ENCODE measurements at regions of chr2 and their contacts with region 1.

Region 1: DNA sequence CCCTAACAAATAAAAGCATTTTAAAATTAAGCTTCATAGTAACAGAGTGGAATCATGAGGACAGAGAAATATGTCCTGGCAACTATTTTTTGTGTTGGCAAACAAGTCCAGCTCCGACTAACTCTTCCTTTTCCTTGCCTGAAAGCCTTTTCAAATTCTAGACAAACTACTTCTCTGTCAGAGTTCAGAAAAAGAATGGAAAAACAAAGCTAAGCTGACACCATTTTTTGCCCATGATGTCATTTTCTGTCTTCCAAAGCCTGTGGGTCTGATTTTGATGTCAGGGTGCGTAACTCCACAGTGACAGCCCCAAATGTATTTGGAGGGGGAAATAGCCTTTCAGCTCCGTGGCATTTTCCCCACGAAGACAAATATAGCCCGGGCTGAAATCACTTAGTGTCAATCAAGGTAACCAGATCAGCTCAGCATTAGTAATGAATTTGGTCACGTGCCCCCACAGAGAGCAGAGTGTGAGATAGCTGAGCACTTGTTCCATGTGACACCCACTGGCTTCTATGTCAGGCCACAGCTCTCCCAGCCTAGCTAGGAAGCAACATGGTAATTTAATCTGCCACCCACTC is 233.0 kb upstream of the SIX2 start:
- DNase-seq: no peak
- ATAC-seq: no peak
- H3K4me3 ChIP-seq: no peak overlapping the region
- H3K27ac ChIP-seq: no peak overlapping the region; the same call in 1 of the 2 replicates
- H3K4me1 ChIP-seq: peaks cover 31% of the 10 kb centered on the region
- H3K27me3 ChIP-seq: no peaks in the 10 kb centered on the region
- CTCF ChIP-seq: no peak

Region 2: DNA sequence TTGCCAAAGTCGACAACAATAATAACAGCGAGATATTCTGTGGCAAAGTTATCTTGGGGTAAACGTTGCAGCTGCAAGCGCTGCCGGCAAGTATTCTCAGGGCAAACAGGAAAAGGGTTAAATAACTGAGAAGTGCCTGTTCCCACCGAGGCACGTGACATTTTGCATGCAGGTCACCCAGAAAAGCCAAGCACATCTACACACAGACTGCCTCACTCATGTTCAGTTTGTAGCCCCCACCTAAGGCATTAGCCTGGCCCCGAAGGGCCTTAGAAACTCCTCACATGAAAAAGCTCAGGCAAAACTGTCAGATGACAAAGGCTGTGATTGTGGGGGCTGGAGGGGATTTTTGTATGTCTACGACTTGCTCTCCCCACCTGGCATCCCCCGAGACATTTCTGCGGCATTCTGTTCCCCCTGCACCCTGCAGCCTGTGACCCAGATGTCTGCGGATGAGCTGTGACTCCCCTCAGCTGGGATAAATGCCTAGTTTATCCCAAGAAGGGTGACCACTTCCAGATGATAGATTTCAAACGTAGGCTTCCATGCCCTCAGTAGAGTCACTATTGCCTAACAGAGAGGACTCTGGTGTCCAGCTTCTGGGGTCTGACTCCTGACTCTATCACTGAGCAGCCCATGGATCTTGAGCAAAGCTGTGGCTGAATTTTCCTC is 17.8 kb before region 1 on chr2:
- CTCF ChIA-PET with region 1: no interaction called
- POLR2A ChIA-PET with region 1: no interaction called
- in situ Hi-C with region 1: no loop called
- intact Hi-C with region 1: no loop called
- DNase-seq: no peak
- ATAC-seq: no peak
- H3K4me3 ChIP-seq: no peak overlapping the region
- H3K27ac ChIP-seq: no peak overlapping the region
- H3K4me1 ChIP-seq: no peaks in the 10 kb centered on the region
- H3K27me3 ChIP-seq: 0 out of 2 replicates have a peak, but pooled peaks cover 5% of the 10 kb centered on the region
- CTCF ChIP-seq: no peak

Region 3: GRCh38 chr2:46502291-46502885 is 1260.1 kb after region 1 on chr2:
- CTCF ChIA-PET with region 1: no interaction called
- POLR2A ChIA-PET with region 1: interaction called, 10 read pairs
- in situ Hi-C with region 1: no loop called
- intact Hi-C with region 1: no loop called
- DNase-seq: no peak
- ATAC-seq: no peak
- H3K4me3 ChIP-seq: no peak overlapping the region
- H3K27ac ChIP-seq: no peak overlapping the region
- H3K4me1 ChIP-seq: no peaks in the 10 kb centered on the region
- H3K27me3 ChIP-seq: peaks cover 12% of the 10 kb centered on the region
- CTCF ChIP-seq: no peak